Panc1 (cell line): ENCODE measurements at regions of chr13 and their contacts with region 1.

Region 1: GRCh38 chr13:31409678-31410356 is 210.0 kb downstream of the B3GLCT start:
- DNase-seq: no peak
- ATAC-seq: no peak
- H3K4me3 ChIP-seq: no peak overlapping the region
- H3K27ac ChIP-seq: no peak overlapping the region
- H3K4me1 ChIP-seq: no peaks in the 10 kb centered on the region
- H3K27me3 ChIP-seq: no peaks in the 10 kb centered on the region
- CTCF ChIP-seq: peak; percentile 13; the same call in 1 of the 2 replicates

Region 2: DNA sequence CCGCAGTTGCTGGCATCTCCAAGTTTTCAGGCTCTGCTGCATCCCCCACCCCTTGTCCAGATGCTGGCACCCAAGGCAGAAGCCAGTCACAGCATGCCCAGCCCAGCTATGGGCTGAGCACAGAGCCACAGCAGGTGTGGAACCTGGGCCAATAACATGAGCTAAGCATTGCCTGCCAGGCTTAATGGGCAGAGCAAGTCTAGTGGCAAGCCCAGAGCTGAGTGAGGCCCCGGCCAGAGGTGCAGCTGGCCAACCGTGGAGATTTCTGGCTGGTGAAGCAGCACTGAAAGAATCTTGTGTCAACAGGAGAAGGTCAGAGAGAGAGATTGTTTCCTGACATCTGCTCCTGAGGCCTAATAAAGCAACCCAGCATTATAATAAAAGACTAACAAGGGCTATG is 99.0 kb before region 1 on chr13:
- CTCF ChIA-PET with region 1: no interaction called
- POLR2A ChIA-PET with region 1: no interaction called
- in situ Hi-C with region 1: no loop called
- intact Hi-C with region 1: no loop called
- DNase-seq: no peak
- ATAC-seq: no peak
- H3K4me3 ChIP-seq: no peak overlapping the region
- H3K27ac ChIP-seq: no peak overlapping the region
- H3K4me1 ChIP-seq: no peaks in the 10 kb centered on the region
- H3K27me3 ChIP-seq: no peaks in the 10 kb centered on the region
- CTCF ChIP-seq: no peak

Region 3: GRCh38 chr13:31352467-31352866 is 57.4 kb before region 1 on chr13:
- CTCF ChIA-PET with region 1: no interaction called
- POLR2A ChIA-PET with region 1: no interaction called
- in situ Hi-C with region 1: no loop called
- intact Hi-C with region 1: loop called (anchors 10 kb)
- DNase-seq: no peak
- ATAC-seq: no peak
- H3K4me3 ChIP-seq: no peak overlapping the region
- H3K27ac ChIP-seq: no peak overlapping the region
- H3K4me1 ChIP-seq: no peaks in the 10 kb centered on the region
- H3K27me3 ChIP-seq: no peaks in the 10 kb centered on the region
- CTCF ChIP-seq: no peak

Region 4: DNA sequence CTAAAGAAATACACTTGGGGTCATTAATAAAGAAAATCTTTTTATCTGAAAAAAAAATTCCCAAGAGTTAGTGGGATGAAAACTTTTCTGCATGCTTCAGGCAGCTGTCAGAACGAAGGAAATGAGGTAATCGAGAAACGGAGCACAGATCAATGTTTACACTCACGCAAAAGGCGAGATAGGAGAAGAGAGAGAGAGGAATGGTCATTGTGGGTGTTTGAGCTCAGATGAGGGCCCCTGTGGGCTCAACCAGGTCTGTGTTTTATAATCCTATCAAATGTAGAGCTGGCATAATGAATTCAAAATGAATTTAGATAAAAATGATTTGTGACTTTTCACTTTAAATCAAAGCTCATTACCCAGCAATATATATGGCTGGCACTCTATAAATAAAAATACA is 323.2 kb after region 1 on chr13:
- CTCF ChIA-PET with region 1: no interaction called
- POLR2A ChIA-PET with region 1: interaction called, 12 read pairs
- in situ Hi-C with region 1: no loop called
- intact Hi-C with region 1: no loop called
- DNase-seq: no peak
- ATAC-seq: no peak
- H3K4me3 ChIP-seq: no peak overlapping the region
- H3K27ac ChIP-seq: no peak overlapping the region
- H3K4me1 ChIP-seq: no peaks in the 10 kb centered on the region
- H3K27me3 ChIP-seq: no peaks in the 10 kb centered on the region
- CTCF ChIP-seq: no peak